ENCODE measurements at regions of chr19 and their contacts with region 1.

Region 1: GRCh38 chr19:58182989-58183816 is at the start of gene ZNF274:
- DNase-seq: peak; percentile 88 to 95 (median 93)
- ATAC-seq: peak; percentile 92
- H3K4me3 ChIP-seq: peak within 1 kb of the TSS; percentile 87
- H3K4me3 Mint-ChIP-seq: peak within 1 kb of the TSS; percentile 91 to 99 (median 94)
- H3K27ac ChIP-seq: peak within 1 kb of the TSS; percentile 97
- H3K27ac Mint-ChIP-seq: peak within 1 kb of the TSS; percentile 98 to 100 (median 99)
- H3K4me1 ChIP-seq: peaks cover 0 to 12% of the 10 kb centered on the region in 2 donors
- H3K4me1 Mint-ChIP-seq: peaks cover 10 to 24% (median 17%) of the 10 kb centered on the region in 7 donors
- H3K27me3 ChIP-seq: no peaks in the 10 kb centered on the region
- H3K27me3 Mint-ChIP-seq: no peaks in the 10 kb centered on the region
- total RNA-seq, gene ZNF274: 20.1 to 91.1 (median 52.7) TPM

Region 2: GRCh38 chr19:57350877-57351805 is 832.1 kb before region 1 on chr19 and contains the start of gene ZNF304:
- CTCF ChIA-PET with region 1: no interaction called
- POLR2A ChIA-PET with region 1: interaction called, 3 read pairs
- intact Hi-C with region 1: loop called in 1 of 2 experiments (anchors 1 kb)
- DNase-seq: peak; percentile 51 to 85 (median 76)
- ATAC-seq: peak; percentile 100
- H3K4me3 ChIP-seq: peak within 1 kb of the TSS; percentile 83
- H3K4me3 Mint-ChIP-seq: peak within 1 kb of the TSS; percentile 93 to 97 (median 96)
- H3K27ac ChIP-seq: peak within 1 kb of the TSS; percentile 77
- H3K27ac Mint-ChIP-seq: peak within 1 kb of the TSS; percentile 80 to 96 (median 92)
- H3K4me1 ChIP-seq: peaks cover 11% of the 10 kb centered on the region in 2 donors
- H3K4me1 Mint-ChIP-seq: peaks cover 28 to 43% (median 32%) of the 10 kb centered on the region in 7 donors
- H3K27me3 ChIP-seq: no peaks in the 10 kb centered on the region
- H3K27me3 Mint-ChIP-seq: peaks cover 0 to 11% (median 7%) of the 10 kb centered on the region in 5 donors
- total RNA-seq, gene ZNF304: 6.0 to 12.5 (median 9.0) TPM

Region 3: GRCh38 chr19:57947208-57948134 is 235.7 kb before region 1 on chr19 and contains the start of gene ZNF256:
- CTCF ChIA-PET with region 1: no interaction called
- POLR2A ChIA-PET with region 1: no interaction called
- intact Hi-C with region 1: loop called in 1 of 2 experiments (anchors 1 kb)
- DNase-seq: peak; percentile 55 to 85 (median 77)
- ATAC-seq: peak; percentile 97
- H3K4me3 ChIP-seq: peak within 1 kb of the TSS; percentile 71
- H3K4me3 Mint-ChIP-seq: peak within 1 kb of the TSS; percentile 89 to 97 (median 95)
- H3K27ac ChIP-seq: peak within 1 kb of the TSS; percentile 80
- H3K27ac Mint-ChIP-seq: peak within 1 kb of the TSS; percentile 83 to 97 (median 92)
- H3K4me1 ChIP-seq: peaks cover 6 to 9% of the 10 kb centered on the region in 2 donors
- H3K4me1 Mint-ChIP-seq: peaks cover 10 to 28% (median 21%) of the 10 kb centered on the region in 7 donors
- H3K27me3 ChIP-seq: no peaks in the 10 kb centered on the region
- H3K27me3 Mint-ChIP-seq: peaks cover 0 to 4% (median 0%) of the 10 kb centered on the region in 5 donors
- total RNA-seq, gene ZNF256: 5.2 to 13.8 (median 11.8) TPM

Region 4: GRCh38 chr19:58228585-58229254 is 45.5 kb after region 1 on chr19 and contains the start of gene ZNF544:
- CTCF ChIA-PET with region 1: interaction called, 6 read pairs
- POLR2A ChIA-PET with region 1: interaction called, 15 read pairs
- intact Hi-C with region 1: loop called (anchors 1 to 2 kb)
- DNase-seq: peak; percentile 25 to 74 (median 39)
- ATAC-seq: peak; percentile 79
- H3K4me3 ChIP-seq: peak within 1 kb of the TSS; percentile 86
- H3K4me3 Mint-ChIP-seq: peak within 1 kb of the TSS; percentile 89 to 95 (median 94)
- H3K27ac ChIP-seq: peak within 1 kb of the TSS; percentile 73
- H3K27ac Mint-ChIP-seq: peak within 1 kb of the TSS in 8 of 9 donors; percentile 76 to 94 (median 84)
- H3K4me1 ChIP-seq: peaks cover 10% of the 10 kb centered on the region in 2 donors
- H3K4me1 Mint-ChIP-seq: peaks cover 19 to 36% (median 28%) of the 10 kb centered on the region in 7 donors
- H3K27me3 ChIP-seq: no peaks in the 10 kb centered on the region
- H3K27me3 Mint-ChIP-seq: no peaks in the 10 kb centered on the region
- total RNA-seq, gene ZNF544: 19.7 to 60.7 (median 42.1) TPM

Region 5: GRCh38 chr19:58380722-58381466 is 197.7 kb after region 1 on chr19 and contains the start of gene ZNF837:
- CTCF ChIA-PET with region 1: no interaction called
- POLR2A ChIA-PET with region 1: no interaction called
- intact Hi-C with region 1: loop called (anchors 1 kb)
- DNase-seq: peak; percentile 90 to 100 (median 98)
- ATAC-seq: peak; percentile 93
- H3K4me3 ChIP-seq: peak within 1 kb of the TSS; percentile 97
- H3K4me3 Mint-ChIP-seq: peak within 1 kb of the TSS; percentile 87 to 98 (median 91)
- H3K27ac ChIP-seq: peak within 1 kb of the TSS; percentile 96
- H3K27ac Mint-ChIP-seq: peak within 1 kb of the TSS; percentile 93 to 97 (median 97)
- H3K4me1 ChIP-seq: peaks cover 21 to 25% of the 10 kb centered on the region in 2 donors
- H3K4me1 Mint-ChIP-seq: peaks cover 23 to 40% (median 34%) of the 10 kb centered on the region in 7 donors
- H3K27me3 ChIP-seq: no peaks in the 10 kb centered on the region
- H3K27me3 Mint-ChIP-seq: no peaks in the 10 kb centered on the region
- total RNA-seq, gene ZNF837: 1.4 to 4.3 (median 2.4) TPM

Region 6: GRCh38 chr19:58451358-58452101 is 268.3 kb after region 1 on chr19 and contains the start of gene ZNF324B:
- CTCF ChIA-PET with region 1: no interaction called
- POLR2A ChIA-PET with region 1: interaction called, 3 read pairs
- intact Hi-C with region 1: loop called in 1 of 2 experiments (anchors 1 kb)
- DNase-seq: peak; percentile 90 to 97 (median 94)
- ATAC-seq: peak; percentile 99
- H3K4me3 ChIP-seq: peak within 1 kb of the TSS; percentile 63
- H3K4me3 Mint-ChIP-seq: peak within 1 kb of the TSS; percentile 85 to 98 (median 88)
- H3K27ac ChIP-seq: peak within 1 kb of the TSS; percentile 81
- H3K27ac Mint-ChIP-seq: peak within 1 kb of the TSS in 8 of 9 donors; percentile 2 to 90 (median 71)
- H3K4me1 ChIP-seq: peaks cover 0 to 4% of the 10 kb centered on the region in 2 donors
- H3K4me1 Mint-ChIP-seq: peaks cover 12 to 23% (median 19%) of the 10 kb centered on the region in 7 donors
- H3K27me3 ChIP-seq: no peaks in the 10 kb centered on the region
- H3K27me3 Mint-ChIP-seq: peaks cover 8 to 26% (median 17%) of the 10 kb centered on the region in 5 donors
- total RNA-seq, gene ZNF324B: 9.1 to 13.9 (median 11.8) TPM

Measured in naive thymus-derived CD4-positive, alpha-beta T cell (primary cell).